Activated CD4-positive, alpha-beta T cell treated with anti-CD3 and anti-CD28 coated beads for 36 hours (primary cell): ENCODE measurements at regions of chr12 and their contacts with region 1.

Region 1: GRCh38 chr12:26246483-26247111 is 51.2 kb downstream of the SSPN start:
- DNase-seq: no peak
- ATAC-seq: no peak
- H3K4me3 Mint-ChIP-seq: no peak overlapping the region
- H3K27ac Mint-ChIP-seq: no peak overlapping the region
- H3K4me1 Mint-ChIP-seq: no peaks in the 10 kb centered on the region
- H3K27me3 Mint-ChIP-seq: peaks cover 10% of the 10 kb centered on the region

Region 2: GRCh38 chr12:26226629-26227360 is 19.8 kb before region 1 on chr12:
- CTCF ChIA-PET with region 1: no interaction called
- POLR2A ChIA-PET with region 1: interaction called, 11 read pairs
- intact Hi-C with region 1: no loop called
- DNase-seq: peak; percentile 21
- ATAC-seq: no peak
- H3K4me3 Mint-ChIP-seq: no peak overlapping the region
- H3K27ac Mint-ChIP-seq: no peak overlapping the region
- H3K4me1 Mint-ChIP-seq: no peaks in the 10 kb centered on the region
- H3K27me3 Mint-ChIP-seq: peaks cover 33% of the 10 kb centered on the region